ENCODE measurements at regions of chr14 and their contacts with region 1.

Region 1: GRCh38 chr14:75230140-75231045 is 48.2 kb upstream of the FOS start:
- DNase-seq: peak; percentile 19 to 89 (median 38)
- ATAC-seq: peak; percentile 62
- H3K4me3 ChIP-seq: no peak overlapping the region
- H3K4me3 Mint-ChIP-seq: peak overlapping the region; percentile 46
- H3K27ac ChIP-seq: peak overlapping the region in 1 of 2 donors; percentile 55
- H3K27ac Mint-ChIP-seq: peak overlapping the region; percentile 75
- H3K4me1 ChIP-seq: peaks cover 58% of the 10 kb centered on the region
- H3K4me1 Mint-ChIP-seq: peaks cover 71% of the 10 kb centered on the region
- H3K27me3 ChIP-seq: no peaks in the 10 kb centered on the region
- H3K27me3 Mint-ChIP-seq: no peaks in the 10 kb centered on the region
- CTCF ChIP-seq: peak; percentile 20

Region 2: GRCh38 chr14:74893614-74894091 is 336.7 kb before region 1 on chr14:
- CTCF ChIA-PET with region 1: no interaction called
- POLR2A ChIA-PET with region 1: no interaction called
- intact Hi-C with region 1: no loop called
- DNase-seq: no peak
- ATAC-seq: no peak
- H3K4me3 ChIP-seq: no peak overlapping the region
- H3K4me3 Mint-ChIP-seq: no peak overlapping the region
- H3K27ac ChIP-seq: no peak overlapping the region
- H3K27ac Mint-ChIP-seq: peak overlapping the region; percentile 3
- H3K4me1 ChIP-seq: peaks cover 1% of the 10 kb centered on the region
- H3K4me1 Mint-ChIP-seq: peaks cover 8% of the 10 kb centered on the region
- H3K27me3 ChIP-seq: no peaks in the 10 kb centered on the region
- H3K27me3 Mint-ChIP-seq: no peaks in the 10 kb centered on the region
- CTCF ChIP-seq: no peak

Region 3: DNA sequence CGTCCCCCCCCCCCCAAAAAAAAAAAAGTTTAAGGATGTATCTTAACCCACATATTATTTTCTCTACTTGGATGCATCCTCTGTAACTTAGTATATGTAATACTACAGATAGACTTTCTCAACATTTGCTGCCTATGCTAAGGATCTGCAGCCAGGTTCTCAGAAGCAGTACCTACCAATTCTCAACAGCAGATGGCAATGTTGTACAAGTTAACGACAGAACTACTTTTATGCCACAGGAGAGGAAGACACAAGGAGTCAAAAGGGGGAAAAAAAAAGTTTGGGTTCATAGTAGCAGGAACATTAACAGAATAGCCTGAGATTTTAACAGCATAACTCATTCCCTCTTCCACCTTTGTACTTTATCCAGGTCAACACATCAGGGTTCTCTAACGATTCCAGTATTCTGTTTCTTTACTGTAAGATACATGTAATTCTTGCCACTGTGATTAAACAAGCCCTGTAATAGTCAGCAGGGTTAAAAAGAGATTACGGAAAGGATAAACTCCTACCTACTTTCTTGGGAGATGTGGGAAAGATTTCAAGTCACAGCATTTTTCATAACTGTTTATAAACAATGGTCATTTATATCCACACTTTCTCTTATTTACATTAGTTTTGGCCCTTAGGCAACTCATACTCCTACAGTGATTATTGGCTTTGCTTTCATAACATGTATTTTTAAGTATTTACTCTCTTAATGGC is 97.9 kb before region 1 on chr14:
- CTCF ChIA-PET with region 1: interaction called, 3 read pairs
- POLR2A ChIA-PET with region 1: no interaction called
- intact Hi-C with region 1: loop called in 1 of 2 experiments (anchors 5 kb)
- DNase-seq: peak in 9 of 14 experiments; percentile 6 to 87 (median 46)
- ATAC-seq: peak; percentile 95
- H3K4me3 ChIP-seq: no peak overlapping the region
- H3K4me3 Mint-ChIP-seq: no peak overlapping the region
- H3K27ac ChIP-seq: no peak overlapping the region
- H3K27ac Mint-ChIP-seq: peak overlapping the region; percentile 2
- H3K4me1 ChIP-seq: peaks cover 10% of the 10 kb centered on the region
- H3K4me1 Mint-ChIP-seq: peaks cover 15% of the 10 kb centered on the region
- H3K27me3 ChIP-seq: no peaks in the 10 kb centered on the region
- H3K27me3 Mint-ChIP-seq: no peaks in the 10 kb centered on the region
- CTCF ChIP-seq: peak; percentile 73

Region 4: GRCh38 chr14:75141967-75142366 is 88.4 kb before region 1 on chr14:
- CTCF ChIA-PET with region 1: interaction called, 8 read pairs
- POLR2A ChIA-PET with region 1: no interaction called
- intact Hi-C with region 1: loop called in 1 of 2 experiments (anchors 2 kb)
- DNase-seq: peak in 7 of 14 experiments; percentile 8 to 73 (median 47)
- ATAC-seq: peak; percentile 69
- H3K4me3 ChIP-seq: no peak overlapping the region
- H3K4me3 Mint-ChIP-seq: no peak overlapping the region
- H3K27ac ChIP-seq: no peak overlapping the region
- H3K27ac Mint-ChIP-seq: peak overlapping the region; percentile 63
- H3K4me1 ChIP-seq: peaks cover 25% of the 10 kb centered on the region
- H3K4me1 Mint-ChIP-seq: peaks cover 74% of the 10 kb centered on the region
- H3K27me3 ChIP-seq: no peaks in the 10 kb centered on the region
- H3K27me3 Mint-ChIP-seq: no peaks in the 10 kb centered on the region
- CTCF ChIP-seq: peak; percentile 51

Region 5: DNA sequence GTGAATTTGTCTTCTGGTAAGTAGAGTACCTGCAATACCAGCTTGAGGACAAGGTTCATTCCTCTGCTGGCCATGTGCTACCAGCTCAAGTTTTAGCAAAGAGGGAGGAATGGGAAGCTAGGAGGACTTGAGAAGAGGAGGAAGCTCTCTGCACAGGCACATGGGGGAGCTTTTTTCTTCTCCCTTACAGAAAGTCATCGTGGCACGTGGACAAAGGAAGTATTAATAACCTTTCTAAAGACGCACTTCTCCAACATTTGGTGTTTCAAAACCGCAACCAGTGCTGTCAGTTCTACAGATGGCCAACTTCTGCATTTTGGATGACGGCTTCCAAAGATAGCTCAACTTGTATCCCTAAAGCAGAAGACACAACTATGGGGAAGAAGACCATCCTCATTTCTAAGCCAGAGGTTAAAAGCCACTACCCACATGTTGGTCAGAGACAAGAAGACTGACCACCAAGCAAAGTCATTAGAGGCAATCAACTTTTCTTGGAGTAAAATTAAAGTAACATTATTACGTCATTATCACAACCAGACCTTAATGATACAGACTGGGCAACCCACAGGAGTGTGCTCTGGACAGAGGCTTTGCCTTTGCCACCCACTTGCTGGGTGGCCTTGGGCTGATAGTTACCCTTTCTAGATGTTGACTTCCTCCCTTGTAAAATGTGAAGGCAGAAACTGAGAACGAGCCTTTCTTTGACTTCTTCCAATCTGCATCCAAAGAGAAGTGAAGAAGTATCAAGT is 41.7 kb before region 1 on chr14:
- CTCF ChIA-PET with region 1: interaction called, 3 read pairs
- POLR2A ChIA-PET with region 1: no interaction called
- intact Hi-C with region 1: loop called in 1 of 2 experiments (anchors 5 kb)
- DNase-seq: peak in 3 of 14 experiments; percentile 36 to 69 (median 61)
- ATAC-seq: no peak
- H3K4me3 ChIP-seq: no peak overlapping the region
- H3K4me3 Mint-ChIP-seq: no peak overlapping the region
- H3K27ac ChIP-seq: no peak overlapping the region
- H3K27ac Mint-ChIP-seq: no peak overlapping the region
- H3K4me1 ChIP-seq: no peaks in the 10 kb centered on the region
- H3K4me1 Mint-ChIP-seq: no peaks in the 10 kb centered on the region
- H3K27me3 ChIP-seq: no peaks in the 10 kb centered on the region
- H3K27me3 Mint-ChIP-seq: no peaks in the 10 kb centered on the region
- CTCF ChIP-seq: no peak

Region 6: DNA sequence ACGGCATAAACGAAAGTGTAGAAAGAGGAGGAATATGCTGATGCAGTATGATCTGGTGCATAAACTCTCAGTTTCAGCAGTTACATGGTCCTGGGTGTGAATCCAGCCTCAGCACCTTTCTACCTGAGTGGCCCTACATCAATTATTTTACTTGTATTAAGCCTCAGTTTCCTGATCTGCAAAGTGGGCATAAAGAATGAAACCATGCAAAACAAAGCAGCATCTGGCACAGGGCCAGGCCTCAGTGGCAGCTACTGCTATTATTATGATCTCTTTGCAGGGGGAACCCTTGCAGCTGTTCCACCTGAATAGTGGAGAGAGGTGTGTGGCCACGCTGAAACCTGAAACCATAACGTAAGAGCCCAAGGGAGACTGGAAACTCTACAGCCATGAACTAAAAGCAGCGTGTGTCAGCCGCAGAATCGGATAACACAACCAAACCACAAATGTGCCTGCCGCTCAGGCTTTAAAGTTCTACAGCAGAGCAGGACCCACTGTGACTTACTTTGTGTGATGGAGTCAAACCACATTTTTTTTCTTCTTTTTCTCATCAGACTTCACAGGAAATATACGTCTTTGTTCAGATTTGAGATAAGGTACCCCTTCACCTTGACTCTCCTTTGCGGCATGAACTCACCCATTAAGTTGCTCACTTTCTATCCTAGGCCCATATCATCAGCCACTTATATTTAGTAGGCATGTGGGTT is 19.0 kb after region 1 on chr14:
- CTCF ChIA-PET with region 1: interaction called, 28 read pairs
- POLR2A ChIA-PET with region 1: interaction called, 13 read pairs
- intact Hi-C with region 1: loop called (anchors 1 to 2 kb)
- DNase-seq: peak; percentile 67 to 97 (median 76)
- ATAC-seq: peak; percentile 72
- H3K4me3 ChIP-seq: peak overlapping the region; percentile 19
- H3K4me3 Mint-ChIP-seq: peak overlapping the region; percentile 50
- H3K27ac ChIP-seq: peak overlapping the region; percentile 75 to 78
- H3K27ac Mint-ChIP-seq: peak overlapping the region; percentile 87
- H3K4me1 ChIP-seq: peaks cover 68% of the 10 kb centered on the region
- H3K4me1 Mint-ChIP-seq: peaks cover 75% of the 10 kb centered on the region
- H3K27me3 ChIP-seq: no peaks in the 10 kb centered on the region
- H3K27me3 Mint-ChIP-seq: no peaks in the 10 kb centered on the region
- CTCF ChIP-seq: no peak

Region 7: DNA sequence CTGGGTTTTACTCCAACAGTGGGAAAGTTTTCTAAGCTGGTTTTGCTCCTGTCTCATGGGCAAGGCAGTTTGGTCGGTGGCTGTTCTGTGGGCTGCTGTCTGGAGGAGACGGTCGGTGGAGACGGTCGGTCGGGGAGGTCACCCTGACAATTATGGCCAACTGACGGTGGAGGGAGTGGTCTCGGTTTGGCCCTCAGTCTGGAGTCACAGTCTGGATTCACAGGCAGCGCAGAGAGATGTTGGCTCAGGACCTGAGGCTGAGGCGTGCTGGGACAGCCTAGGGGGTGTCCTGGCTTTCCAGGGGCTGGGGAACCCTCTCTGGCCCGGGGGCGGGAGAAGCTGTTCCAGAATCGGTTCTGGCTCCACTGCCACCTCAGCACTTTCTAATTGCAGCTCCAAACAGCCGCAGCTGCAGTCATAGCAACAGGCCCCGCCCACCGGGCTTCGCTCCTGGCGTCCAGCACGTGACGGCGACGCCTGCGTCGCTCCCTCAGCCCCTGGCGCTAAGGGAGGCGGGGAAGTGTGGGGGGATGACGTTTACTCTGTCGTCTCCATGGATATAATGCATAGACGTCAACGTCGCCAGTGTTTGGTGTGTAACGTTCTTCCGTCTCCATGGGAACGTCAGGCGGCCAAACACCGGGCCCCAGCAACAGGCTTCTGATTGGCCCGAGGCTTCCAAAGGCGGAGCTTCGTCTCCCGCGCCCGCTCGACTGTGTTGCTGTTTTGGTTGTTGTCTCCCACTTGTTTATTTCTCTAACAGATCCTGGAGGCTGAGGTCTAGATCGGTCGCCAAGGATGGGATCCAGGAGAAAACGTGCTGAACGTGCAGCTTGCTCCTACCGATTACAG is 28.4 kb after region 1 on chr14:
- CTCF ChIA-PET with region 1: interaction called, 8 read pairs
- POLR2A ChIA-PET with region 1: interaction called, 12 read pairs
- intact Hi-C with region 1: loop called in 1 of 2 experiments (anchors 1 kb)
- DNase-seq: peak; percentile 99 to 100 (median 100)
- ATAC-seq: peak; percentile 86
- H3K4me3 ChIP-seq: peak overlapping the region; percentile 50
- H3K4me3 Mint-ChIP-seq: peak overlapping the region; percentile 81
- H3K27ac ChIP-seq: peak overlapping the region; percentile 93 to 96
- H3K27ac Mint-ChIP-seq: peak overlapping the region; percentile 98
- H3K4me1 ChIP-seq: peaks cover 38% of the 10 kb centered on the region
- H3K4me1 Mint-ChIP-seq: peaks cover 45% of the 10 kb centered on the region
- H3K27me3 ChIP-seq: no peaks in the 10 kb centered on the region
- H3K27me3 Mint-ChIP-seq: no peaks in the 10 kb centered on the region
- CTCF ChIP-seq: no peak

Region 8: GRCh38 chr14:75278422-75279161 is 48.2 kb after region 1 on chr14 and contains the start of gene FOS:
- CTCF ChIA-PET with region 1: interaction called, 10 read pairs
- POLR2A ChIA-PET with region 1: interaction called, 4 read pairs
- intact Hi-C with region 1: loop called in 1 of 2 experiments (anchors 1 kb)
- DNase-seq: peak; percentile 79 to 97 (median 86)
- ATAC-seq: peak; percentile 66
- H3K4me3 ChIP-seq: peak within 1 kb of the TSS; percentile 88
- H3K4me3 Mint-ChIP-seq: peak within 1 kb of the TSS; percentile 94
- H3K27ac ChIP-seq: peak within 1 kb of the TSS; percentile 69 to 82
- H3K27ac Mint-ChIP-seq: peak within 1 kb of the TSS; percentile 92
- H3K4me1 ChIP-seq: peaks cover 71% of the 10 kb centered on the region
- H3K4me1 Mint-ChIP-seq: peaks cover 56% of the 10 kb centered on the region
- H3K27me3 ChIP-seq: peaks cover 4% of the 10 kb centered on the region in 2 experiments
- H3K27me3 Mint-ChIP-seq: peaks cover 73% of the 10 kb centered on the region
- CTCF ChIP-seq: no peak
- total RNA-seq, gene FOS: 1,565 to 1,685 TPM

Measured in CD4-positive, alpha-beta T cell (primary cell).